Sciatic nerve (tissue), 2 donors: ENCODE measurements at regions of chr12 and their contacts with region 1.

Region 1: DNA sequence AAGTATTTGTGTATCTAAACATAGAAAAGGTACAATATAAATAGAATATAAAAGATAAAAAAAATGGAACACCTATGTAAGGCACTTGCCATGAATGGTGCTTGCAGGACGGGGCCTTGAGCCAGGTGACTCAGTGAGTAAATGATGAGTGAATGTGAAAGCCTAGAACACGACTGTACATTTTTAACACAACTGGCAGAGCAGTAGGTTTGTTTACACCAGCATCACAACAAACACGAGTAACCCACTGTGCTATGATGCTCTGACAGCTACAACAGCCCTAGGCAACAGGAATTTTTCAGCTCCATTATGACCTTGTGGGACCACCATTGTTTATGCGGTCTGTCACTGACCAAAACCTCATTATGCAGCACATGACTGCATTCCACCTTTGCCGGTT is 234.7 kb upstream of the CAND1 start:
- DNase-seq: no peak
- ATAC-seq: no peak

Region 2: GRCh38 chr12:66087365-66087943 is 947.0 kb before region 1 on chr12:
- intact Hi-C with region 1: no loop called
- DNase-seq: peak; percentile 84
- ATAC-seq: peak; percentile 74

Region 3: DNA sequence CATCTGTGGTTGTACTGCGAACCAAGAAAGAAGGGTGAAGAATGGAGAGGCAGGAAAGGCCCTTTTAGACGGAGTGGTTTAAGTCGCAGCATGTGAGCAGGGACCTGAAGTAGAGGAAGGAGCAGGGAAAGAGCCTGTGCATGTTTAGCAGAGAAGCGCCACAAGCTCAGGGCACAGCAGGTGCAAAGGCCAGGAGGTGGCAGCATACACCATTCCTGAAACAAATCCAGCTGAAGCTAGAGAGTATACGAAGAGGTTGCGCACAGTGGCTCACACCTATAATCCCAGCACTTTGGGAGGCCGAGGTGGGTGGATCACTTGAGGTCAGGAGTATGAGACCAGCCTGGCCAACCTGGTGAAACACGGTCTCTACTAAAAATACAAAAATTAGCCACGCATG is 682.3 kb before region 1 on chr12:
- intact Hi-C with region 1: no loop called
- DNase-seq: no peak
- ATAC-seq: peak; percentile 46

Region 4: DNA sequence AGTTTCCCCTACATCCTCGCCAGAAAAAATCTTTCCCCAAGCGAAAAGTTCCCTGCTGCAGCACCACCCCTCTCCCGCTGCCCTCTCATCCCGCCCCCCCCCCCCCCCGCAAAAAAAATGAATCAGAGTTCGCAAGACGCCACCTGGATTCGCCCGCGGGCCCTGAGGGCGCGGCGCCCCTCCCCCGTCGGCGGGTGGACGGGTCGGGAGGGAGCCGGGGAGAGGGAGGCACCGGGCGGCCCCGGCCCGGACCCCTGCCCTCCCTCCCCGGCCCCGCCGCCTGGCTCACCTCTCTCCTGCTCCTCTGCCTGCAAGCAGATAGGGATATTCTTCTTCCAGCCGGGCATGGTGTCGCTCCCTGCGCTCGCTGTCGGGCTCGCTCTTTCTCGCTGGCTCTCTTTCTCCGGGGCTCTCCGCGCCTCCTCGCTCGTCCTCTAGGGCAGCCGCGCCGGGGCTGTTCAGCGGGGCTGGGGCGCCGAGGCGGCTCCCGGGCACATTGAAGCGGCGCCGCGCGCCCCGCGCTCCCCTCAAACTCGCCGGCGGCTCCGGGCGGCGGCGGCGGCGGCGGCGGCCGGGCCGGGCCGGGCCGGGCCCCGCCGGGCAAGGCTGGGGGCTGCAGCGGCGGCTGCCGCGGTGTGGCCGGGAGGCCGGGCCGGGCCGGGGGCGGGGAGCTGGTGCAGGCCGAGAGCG is 34.4 kb after region 1 on chr12:
- intact Hi-C with region 1: no loop called
- DNase-seq: no peak
- ATAC-seq: peak; percentile 44

Region 5: GRCh38 chr12:68137335-68137830 is 1102.9 kb after region 1 on chr12:
- intact Hi-C with region 1: loop called (anchors 10 kb)
- DNase-seq: no peak
- ATAC-seq: no peak